HepG2 (cell line): ENCODE measurements at regions of chr3 and their contacts with region 1.

Region 1: GRCh38 chr3:53478166-53478830 is 16.1 kb upstream of the CACNA1D start:
- DNase-seq: peak; percentile 98
- ATAC-seq: peak; percentile 93
- H3K4me3 ChIP-seq: peak overlapping the region in 2 of 3 experiments; percentile 26 to 61; a peak in 3 of 6 replicates
- H3K27ac ChIP-seq: peak overlapping the region; percentile 95
- H3K4me1 ChIP-seq: peaks cover 48% of the 10 kb centered on the region
- H3K27me3 ChIP-seq: no peaks in the 10 kb centered on the region
- CTCF ChIP-seq: no peak
- EP300 ChIP-seq: peak in 1 of 2 experiments; percentile 97
- POLR2A ChIP-seq: peak in 1 of 2 experiments; percentile 41; a peak in 1 of 4 replicates
- RAD21 ChIP-seq: no peak

Region 2: DNA sequence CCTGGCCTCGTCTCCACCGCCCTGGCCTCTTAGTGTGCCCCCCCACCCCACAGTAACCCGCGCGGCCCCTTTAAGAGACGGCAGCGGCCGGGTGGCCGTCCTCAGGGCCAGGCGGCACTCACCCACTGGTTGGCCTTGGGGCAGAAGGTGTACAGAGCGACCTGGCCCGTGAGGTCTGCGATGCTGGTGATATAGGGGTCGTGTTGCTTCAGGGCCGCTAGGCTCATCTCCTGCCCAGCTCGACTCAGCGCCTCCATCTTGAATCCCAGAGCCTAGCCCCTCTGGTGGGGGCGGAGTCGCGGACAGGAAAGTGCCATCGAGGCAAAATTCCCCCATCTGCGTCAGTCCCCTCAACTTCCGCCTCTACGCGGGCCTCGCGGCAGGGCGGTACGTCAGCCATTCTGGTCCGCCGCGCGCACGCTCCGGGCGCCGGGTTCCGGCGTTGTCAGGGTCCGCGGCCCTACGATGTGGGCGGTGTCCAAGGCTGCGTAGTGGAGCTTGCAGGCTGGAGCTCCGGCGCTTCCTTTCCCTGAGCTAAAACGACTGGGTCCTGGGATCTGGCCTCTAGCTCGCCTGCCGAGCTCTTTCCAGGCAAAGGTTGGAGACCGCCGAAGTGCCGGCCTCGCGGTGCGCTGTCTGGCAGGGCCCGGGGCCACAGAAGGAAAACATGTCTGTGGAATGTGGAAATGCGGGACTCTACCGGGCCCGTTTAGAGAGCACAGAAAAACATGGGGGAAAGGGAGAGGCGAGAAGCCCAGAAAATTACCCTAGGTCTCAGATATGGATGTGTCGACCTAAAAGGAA is 130.8 kb before region 1 on chr3 and contains the start of gene DCP1A:
- CTCF ChIA-PET with region 1: no interaction called
- POLR2A ChIA-PET with region 1: interaction called, 15 read pairs
- in situ Hi-C with region 1: no loop called
- intact Hi-C with region 1: no loop called
- DNase-seq: peak; percentile 93
- ATAC-seq: peak; percentile 96
- H3K4me3 ChIP-seq: peak within 1 kb of the TSS; percentile 76 to 99 (median 97)
- H3K27ac ChIP-seq: peak within 1 kb of the TSS; percentile 98
- H3K4me1 ChIP-seq: peaks cover 40% of the 10 kb centered on the region
- H3K27me3 ChIP-seq: no peaks in the 10 kb centered on the region; a peak in 1 of 5 replicates
- CTCF ChIP-seq: peak; percentile 45
- EP300 ChIP-seq: peak; percentile 68 to 81; a peak in 2 of 4 replicates
- POLR2A ChIP-seq: peak; percentile 94 to 97
- RAD21 ChIP-seq: peak; percentile 75
- total RNA-seq, gene DCP1A: 14.2 and 20.7 TPM in 2 replicates